Dorsolateral prefrontal cortex (tissue), 120 donors: ENCODE measurements at regions of chr9 and their contacts with region 1.

Region 1: DNA sequence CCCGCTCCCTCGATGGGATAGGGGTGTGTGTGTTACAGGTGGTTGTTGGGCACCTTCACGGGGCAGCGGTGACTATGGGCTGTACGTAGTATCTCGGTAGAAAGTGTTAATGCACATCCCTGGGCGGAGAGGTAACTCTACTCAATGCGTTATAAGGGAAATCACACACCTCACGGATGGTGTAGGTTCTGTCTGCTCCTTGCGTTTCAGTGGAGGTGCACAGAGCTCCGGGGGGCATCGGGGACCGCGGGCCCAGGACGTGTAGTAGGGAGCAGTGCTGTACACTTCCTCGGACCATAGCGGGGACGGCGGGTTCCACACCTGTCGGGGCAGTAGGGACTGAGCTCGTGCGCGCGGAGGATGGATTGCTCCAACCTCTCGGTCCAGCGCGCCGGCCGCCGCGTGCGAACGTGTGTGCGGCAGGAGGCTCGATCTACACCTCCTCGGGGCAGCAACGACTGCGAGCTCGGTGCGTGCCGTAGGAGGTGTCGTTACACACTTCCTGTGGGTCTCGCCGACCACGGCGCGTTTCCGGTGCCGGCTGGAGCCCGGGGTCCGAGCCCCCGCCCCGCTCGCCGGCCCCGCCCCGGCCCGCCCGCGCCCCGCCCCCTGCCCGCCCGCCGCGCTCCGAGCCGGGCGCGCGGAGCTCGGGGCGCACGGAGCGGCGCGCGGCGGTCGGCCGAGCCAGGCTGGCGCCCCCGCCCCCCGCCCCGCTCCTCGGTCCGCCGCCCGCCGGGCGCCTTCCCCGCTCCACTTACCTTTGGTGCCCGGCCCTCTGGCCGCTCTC is at the start of gene KIAA1958:
- DNase-seq: peak; percentile 63 to 85 (median 76)
- H3K4me3 ChIP-seq: peak within 1 kb of the TSS; percentile 67 to 93 (median 85)
- H3K27ac ChIP-seq: peak within 1 kb of the TSS in 58 of 59 donors; percentile 38 to 93 (median 84)
- H3K27me3 ChIP-seq: no peaks in the 10 kb centered on the region
- CTCF ChIP-seq: peak in 3 of 56 donors; percentile 5 to 21 (median 19)
- total RNA-seq, gene KIAA1958: 12.9 to 46.2 (median 27.1) TPM

Region 2: GRCh38 chr9:111700776-111701175 is 785.6 kb before region 1 on chr9:
- intact Hi-C with region 1: no loop called
- DNase-seq: no peak
- H3K4me3 ChIP-seq: no peak overlapping the region
- H3K27ac ChIP-seq: no peak overlapping the region
- H3K27me3 ChIP-seq: no peaks in the 10 kb centered on the region
- CTCF ChIP-seq: no peak

Region 3: DNA sequence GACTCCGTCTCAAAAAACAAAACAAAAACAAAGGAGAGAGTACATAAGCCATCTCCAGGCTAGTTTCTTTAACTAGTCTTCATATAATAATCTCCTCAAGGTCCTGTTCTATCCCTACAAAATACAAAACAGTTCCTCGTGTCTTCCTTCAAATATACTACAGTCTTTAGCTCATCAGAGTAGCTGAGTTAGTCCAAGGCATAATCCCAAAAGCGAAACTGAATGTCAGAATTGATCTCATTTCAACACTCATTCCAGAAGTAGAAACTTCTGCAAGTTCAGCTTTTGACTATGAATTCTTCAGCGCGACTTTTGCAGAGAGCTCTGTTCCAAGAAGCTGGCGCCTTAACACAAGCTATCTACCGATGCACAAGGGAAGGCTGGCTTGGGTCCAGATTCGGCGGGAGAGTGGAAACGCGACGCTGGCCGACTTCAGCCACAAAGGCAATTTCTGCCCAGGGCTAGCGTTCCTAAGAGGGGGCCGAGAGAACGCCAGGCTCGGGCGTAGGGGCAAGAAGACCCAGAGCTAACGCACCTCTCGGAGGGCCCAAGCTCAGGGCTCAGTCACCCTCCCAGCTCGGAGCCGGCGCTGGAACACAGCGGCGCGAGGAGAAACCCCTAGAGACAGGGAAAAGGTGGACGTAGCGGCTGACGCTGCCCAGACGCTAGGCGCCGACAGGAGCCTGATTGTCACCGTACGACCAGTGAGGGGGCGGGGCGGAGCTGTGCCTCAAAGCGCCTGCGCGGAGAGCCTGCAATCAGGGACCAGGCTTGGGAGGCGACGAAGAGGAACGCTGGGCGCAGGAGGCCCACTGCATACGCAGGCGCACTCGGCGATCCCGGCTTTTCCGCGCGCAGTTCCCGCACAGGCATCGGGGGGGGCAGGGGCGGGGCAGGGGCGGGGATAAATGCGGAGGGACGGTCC is 107.0 kb before region 1 on chr9:
- intact Hi-C with region 1: loop called (anchors 5 to 10 kb)
- DNase-seq: peak; percentile 97 to 99 (median 98)
- H3K4me3 ChIP-seq: peak overlapping the region; percentile 68 to 99 (median 91)
- H3K27ac ChIP-seq: peak overlapping the region; percentile 79 to 99 (median 96)
- H3K27me3 ChIP-seq: no peaks in the 10 kb centered on the region
- CTCF ChIP-seq: peak in 49 of 56 donors; percentile 8 to 67 (median 33)

Region 4: GRCh38 chr9:112443200-112443599 is 43.2 kb before region 1 on chr9:
- intact Hi-C with region 1: loop called in 1 of 2 experiments (anchors 5 kb)
- DNase-seq: peak in 1 of 10 donors; percentile 31
- H3K4me3 ChIP-seq: no peak overlapping the region
- H3K27ac ChIP-seq: no peak overlapping the region
- H3K27me3 ChIP-seq: no peaks in the 10 kb centered on the region
- CTCF ChIP-seq: peak in 55 of 56 donors; percentile 25 to 79 (median 60)

Region 5: DNA sequence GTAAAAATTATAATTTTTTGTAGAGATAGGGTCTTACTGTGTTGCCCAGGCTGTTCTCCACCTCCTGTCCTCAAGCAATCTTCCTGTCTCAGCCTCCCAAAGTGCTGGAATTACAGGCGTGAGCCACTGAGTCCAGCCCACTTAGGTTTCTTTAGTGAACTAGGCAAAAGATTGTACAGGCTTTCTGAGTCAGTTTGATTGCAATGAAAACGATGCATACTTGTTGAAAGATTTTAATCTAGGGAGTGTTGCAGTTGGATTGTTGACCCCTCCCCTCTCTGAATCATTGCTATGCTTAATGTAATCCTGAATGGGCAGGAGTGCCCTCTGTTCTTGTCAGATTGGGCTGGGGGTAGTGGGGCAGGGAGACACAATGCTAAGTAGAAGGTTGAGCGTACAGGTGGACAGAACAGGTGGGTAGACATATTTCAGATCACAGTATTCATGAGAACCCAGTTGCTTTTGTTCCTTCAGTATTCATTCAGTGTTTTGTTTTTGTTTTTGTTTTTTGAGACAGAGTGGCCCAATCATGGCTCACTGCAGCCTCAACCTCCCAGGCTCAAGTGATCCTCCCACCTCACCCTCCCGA is 70.2 kb after region 1 on chr9:
- intact Hi-C with region 1: loop called in 1 of 2 experiments (anchors 10 kb)
- DNase-seq: no peak
- H3K4me3 ChIP-seq: no peak overlapping the region
- H3K27ac ChIP-seq: no peak overlapping the region
- H3K27me3 ChIP-seq: no peaks in the 10 kb centered on the region
- CTCF ChIP-seq: no peak

Region 6: GRCh38 chr9:112570671-112571167 is 84.3 kb after region 1 on chr9:
- intact Hi-C with region 1: loop called in 1 of 2 experiments (anchors 5 kb)
- DNase-seq: peak; percentile 53 to 80 (median 70)
- H3K4me3 ChIP-seq: no peak overlapping the region
- H3K27ac ChIP-seq: peak overlapping the region in 44 of 59 donors; percentile 2 to 78 (median 45)
- H3K27me3 ChIP-seq: no peaks in the 10 kb centered on the region
- CTCF ChIP-seq: peak in 4 of 56 donors; percentile 5 to 26 (median 20)

Region 7: DNA sequence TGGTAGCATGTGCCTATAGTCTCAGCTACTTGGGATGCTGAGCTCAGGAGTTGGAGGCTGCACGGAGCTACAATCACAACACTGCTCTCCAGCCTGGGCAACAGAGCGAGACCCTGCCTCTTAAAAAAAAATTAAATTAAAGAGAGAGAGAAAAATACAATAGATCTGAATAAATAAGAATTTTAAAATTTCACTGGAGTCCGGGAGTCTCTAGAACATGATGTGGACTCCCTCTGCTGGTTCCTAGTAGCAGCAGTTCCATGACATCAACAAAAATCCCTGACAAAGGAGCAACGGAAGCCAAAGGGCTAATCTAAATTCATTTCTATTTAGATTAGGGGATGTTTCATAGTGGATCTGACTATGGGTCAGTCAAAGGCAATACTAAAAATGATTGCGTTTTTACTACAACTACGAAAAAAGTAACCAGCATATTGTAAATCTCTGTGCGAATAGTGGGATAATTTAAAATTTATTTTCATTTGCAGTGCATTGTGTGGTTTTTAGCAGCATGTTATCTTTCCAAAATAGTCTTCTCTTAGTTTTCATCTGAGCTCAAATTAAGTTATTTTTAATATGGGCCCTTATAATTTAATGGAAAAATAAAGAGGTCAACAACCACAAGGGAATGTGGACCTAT is 224.8 kb after region 1 on chr9:
- intact Hi-C with region 1: loop called (anchors 2 to 5 kb)
- DNase-seq: peak in 2 of 10 donors; percentile 9 to 46
- H3K4me3 ChIP-seq: peak overlapping the region in 28 of 59 donors; percentile 2 to 51 (median 24)
- H3K27ac ChIP-seq: peak overlapping the region in 51 of 59 donors; percentile 17 to 85 (median 65)
- H3K27me3 ChIP-seq: no peaks in the 10 kb centered on the region
- CTCF ChIP-seq: peak; percentile 30 to 89 (median 72)

Region 8: DNA sequence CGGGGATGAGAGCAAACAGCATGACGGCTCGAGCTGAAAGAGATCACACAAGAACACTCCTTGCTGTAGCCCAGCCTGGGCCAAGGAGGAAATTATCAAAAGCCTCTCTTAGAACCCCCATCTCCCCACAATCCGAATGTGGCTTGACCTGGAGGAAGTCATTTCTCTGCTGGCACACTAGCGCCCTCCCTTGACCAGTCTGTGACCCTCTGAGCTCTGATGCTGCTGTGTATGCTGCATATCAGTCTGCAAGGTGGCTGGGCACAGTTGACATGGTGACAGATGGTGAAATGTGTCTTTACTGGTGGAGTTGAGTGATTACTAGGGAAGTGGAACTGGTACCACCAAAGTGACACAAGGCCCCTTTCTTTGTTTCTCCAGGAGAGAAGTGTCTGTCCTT is 401.0 kb after region 1 on chr9:
- intact Hi-C with region 1: no loop called
- DNase-seq: no peak
- H3K4me3 ChIP-seq: no peak overlapping the region
- H3K27ac ChIP-seq: no peak overlapping the region
- H3K27me3 ChIP-seq: peaks cover 0 to 9% (median 0%) of the 10 kb centered on the region in 45 donors
- CTCF ChIP-seq: peak in 18 of 56 donors; percentile 7 to 48 (median 20)